A673 (cell line): ENCODE measurements at regions of chr12 and their contacts with region 1.

Region 1: DNA sequence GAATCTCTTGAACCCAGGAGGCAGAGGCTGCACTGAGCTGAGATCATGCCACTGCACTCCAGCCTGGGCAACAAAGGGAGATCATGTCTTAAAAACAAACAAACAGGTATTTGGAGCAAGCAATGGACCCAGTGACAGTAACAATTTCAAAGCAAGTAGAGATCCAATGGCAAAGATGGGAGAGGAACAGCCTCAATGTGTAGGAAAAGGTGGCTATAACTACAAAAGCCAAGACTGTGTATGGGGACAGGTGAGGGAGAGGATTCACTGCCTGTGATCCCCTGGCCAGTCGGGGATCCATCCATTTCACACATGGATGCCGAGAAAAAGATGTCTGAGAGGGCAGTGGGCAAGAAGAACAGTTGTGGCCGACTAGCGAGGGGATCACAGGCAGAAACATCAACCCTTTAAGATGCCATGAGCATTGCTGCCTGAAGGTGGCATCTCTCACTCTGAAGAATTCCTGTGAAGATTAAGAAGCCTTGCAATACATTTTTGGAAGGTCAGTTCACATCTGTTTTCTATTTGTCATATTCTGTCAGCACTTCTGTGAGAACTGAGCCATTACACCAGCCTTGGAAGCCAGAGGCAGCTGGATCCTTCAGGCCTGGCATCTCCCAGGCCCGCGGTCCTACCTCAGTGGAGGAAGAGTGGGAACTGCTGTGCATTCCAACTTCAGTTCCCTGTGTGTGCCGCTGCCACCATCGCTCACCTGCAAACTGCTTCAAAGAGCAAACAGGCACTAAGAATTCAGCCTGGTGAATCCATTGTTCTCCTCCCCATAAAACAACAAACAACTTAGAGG is 54.5 kb upstream of the FRS2 start:
- DNase-seq: peak; percentile 90
- H3K4me3 ChIP-seq: no peak overlapping the region
- H3K27ac ChIP-seq: peak overlapping the region; percentile 18
- H3K4me1 ChIP-seq: peaks cover 7% of the 10 kb centered on the region
- H3K27me3 ChIP-seq: no peaks in the 10 kb centered on the region
- CTCF ChIP-seq: peak; percentile 83

Region 2: DNA sequence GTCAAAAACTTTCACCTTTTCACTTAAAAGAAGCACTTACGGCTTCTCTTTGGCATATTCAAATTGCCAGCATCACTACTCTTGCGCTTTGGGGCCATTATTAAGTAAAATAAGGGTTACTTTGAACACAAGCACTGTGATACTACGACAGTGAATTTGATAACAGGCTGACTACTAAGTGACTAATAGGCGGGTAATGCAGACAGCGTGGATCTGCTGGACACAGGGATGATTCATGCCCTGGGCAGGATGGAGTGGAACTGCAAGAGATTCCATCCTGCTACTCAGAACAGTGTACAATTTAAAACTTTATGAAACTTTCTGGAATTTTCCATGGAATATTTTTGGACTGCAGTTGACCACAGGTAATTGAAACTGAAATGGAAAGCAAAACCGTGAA is 10.2 kb before region 1 on chr12:
- CTCF ChIA-PET with region 1: interaction called, 10 read pairs
- POLR2A ChIA-PET with region 1: no interaction called
- intact Hi-C with region 1: no loop called
- DNase-seq: peak; percentile 18
- H3K4me3 ChIP-seq: no peak overlapping the region
- H3K27ac ChIP-seq: no peak overlapping the region
- H3K4me1 ChIP-seq: no peaks in the 10 kb centered on the region
- H3K27me3 ChIP-seq: no peaks in the 10 kb centered on the region
- CTCF ChIP-seq: no peak

Region 3: DNA sequence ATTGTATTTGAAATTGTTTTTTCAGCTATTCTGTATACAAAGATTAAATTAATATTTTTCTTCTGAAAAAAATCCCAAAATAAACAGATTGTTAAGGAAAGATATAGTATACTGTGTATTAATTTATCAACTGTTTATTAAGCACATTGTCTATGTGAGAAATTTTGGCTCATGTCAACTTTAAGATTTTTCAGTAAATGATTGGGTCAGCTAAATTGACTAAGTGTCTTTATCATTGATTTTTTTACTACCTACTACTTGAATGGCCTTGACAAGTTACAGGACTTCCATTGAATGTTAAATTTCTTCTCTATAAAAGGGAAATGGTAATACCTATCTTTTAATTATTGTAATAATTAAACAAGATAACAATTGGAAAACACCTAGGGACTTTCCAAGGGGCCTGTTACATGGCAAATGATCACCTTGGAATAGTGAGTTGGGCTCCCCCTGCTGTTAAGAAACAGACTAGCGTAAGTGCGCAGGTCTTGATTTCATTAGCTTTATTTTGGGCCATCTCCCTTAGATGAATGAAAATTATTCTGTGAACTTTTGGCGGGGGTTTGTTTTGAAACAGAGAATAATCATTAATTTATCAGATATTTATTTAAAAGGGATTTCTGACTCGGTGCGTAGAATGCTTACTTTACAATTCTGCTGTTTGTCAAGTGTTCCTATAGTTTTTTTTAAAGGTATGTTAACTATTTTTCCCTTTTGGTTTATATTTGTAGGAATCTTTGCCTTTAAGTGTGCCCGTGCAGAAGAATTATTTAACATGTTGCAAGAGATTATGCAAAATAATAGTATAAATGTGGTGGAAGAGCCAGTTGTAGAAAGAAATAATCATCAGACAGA is 155.1 kb after region 1 on chr12:
- CTCF ChIA-PET with region 1: no interaction called
- POLR2A ChIA-PET with region 1: no interaction called
- intact Hi-C with region 1: loop called (anchors 1 kb)
- DNase-seq: peak; percentile 73
- H3K4me3 ChIP-seq: no peak overlapping the region
- H3K27ac ChIP-seq: no peak overlapping the region
- H3K4me1 ChIP-seq: no peaks in the 10 kb centered on the region
- H3K27me3 ChIP-seq: no peaks in the 10 kb centered on the region
- CTCF ChIP-seq: peak; percentile 92